ENCODE measurements at regions of chr15 and their contacts with region 1.

Region 1: GRCh38 chr15:85727068-85727467 is 67.7 kb downstream of the KLHL25 start:
- DNase-seq: no peak
- CTCF ChIP-seq: no peak

Region 2: GRCh38 chr15:85646538-85647091 is 80.5 kb before region 1 on chr15:
- in situ Hi-C with region 1: no loop called
- DNase-seq: peak; percentile 61
- CTCF ChIP-seq: no peak

Region 3: GRCh38 chr15:85785887-85786780 is 59.1 kb after region 1 on chr15:
- in situ Hi-C with region 1: loop called (anchors 10 kb)
- DNase-seq: peak; percentile 28
- CTCF ChIP-seq: no peak

Region 4: DNA sequence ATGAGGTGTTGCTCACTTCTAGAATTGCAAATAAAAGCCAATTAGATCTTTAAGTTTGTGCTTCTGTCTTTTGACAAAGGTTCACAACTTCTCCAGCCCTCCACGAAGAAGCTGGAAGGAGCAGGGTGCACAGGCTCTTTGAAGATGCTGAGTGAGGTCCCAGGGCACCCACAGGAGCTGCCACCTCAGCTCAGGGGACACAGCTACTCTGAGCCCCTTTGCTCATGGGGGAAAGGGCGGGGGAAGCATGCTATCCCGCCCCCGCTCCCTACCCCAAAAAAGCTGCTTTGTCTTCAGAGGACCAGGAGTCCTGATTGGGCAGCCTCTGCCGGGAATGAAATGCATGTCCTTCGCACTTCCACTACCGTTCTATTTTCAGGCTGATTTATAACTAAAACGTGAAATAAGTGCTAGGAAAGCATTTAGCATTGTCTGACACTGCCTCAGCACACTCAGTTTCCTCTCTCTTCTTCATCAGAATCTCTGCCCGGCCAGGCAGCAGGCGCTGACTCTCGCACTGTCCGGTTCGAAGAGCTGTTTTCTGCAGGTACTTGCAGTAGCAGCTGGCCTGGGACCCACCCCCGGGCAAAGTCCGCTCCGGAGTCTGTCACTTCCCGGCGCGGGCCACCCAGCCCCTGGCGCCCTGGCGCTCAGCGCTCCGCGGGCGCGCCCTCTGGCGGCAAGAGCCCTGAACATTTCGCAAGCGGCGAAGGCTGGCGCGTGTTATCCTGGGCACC is 113.2 kb after region 1 on chr15:
- in situ Hi-C with region 1: loop called (anchors 5 kb)
- DNase-seq: peak; percentile 90
- CTCF ChIP-seq: peak; percentile 93

Measured in GM13976 (cell line).